Heart right ventricle (tissue), 16 donors: ENCODE measurements at regions of chr10 and their contacts with region 1.

Region 1: DNA sequence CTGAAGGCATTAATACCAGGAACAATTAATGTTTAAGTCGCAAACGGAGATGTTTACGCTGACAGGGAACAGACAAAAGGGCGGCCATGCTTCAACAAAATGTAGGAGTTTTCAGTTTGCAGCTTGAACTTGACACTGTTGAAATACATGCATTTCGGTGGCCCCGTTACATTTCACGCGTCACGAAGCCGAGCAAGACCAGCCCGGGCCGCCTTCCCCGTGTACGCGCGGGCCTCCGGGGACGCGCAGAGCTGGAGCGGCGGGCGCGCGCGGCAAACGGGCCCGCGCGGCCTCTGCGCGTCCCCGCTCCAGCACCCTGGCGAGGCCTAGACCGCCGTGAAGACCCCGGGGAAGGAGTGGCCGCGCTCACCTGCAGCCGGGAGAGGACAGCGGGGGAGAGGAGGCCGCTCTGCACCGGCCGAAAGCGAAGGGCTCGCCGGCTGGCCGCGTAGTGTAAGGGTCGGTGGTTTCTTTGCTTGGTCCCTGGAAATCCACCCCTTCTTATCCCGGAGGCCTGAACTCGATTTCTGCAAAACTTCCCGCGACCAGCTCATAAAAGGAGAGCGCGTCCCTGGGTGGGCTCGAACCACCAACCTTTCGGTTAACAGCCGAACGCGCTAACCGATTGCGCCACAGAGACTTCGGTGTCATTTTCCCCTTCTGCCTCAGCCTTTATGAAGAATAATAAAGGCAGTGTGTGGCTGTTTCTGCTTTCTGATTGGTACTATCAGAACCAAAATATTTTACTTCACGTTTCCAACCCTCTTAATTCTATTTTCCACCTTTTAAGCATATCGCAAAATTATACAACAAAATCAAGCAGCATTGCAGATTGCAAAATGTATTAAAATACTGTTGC is 11.4 kb upstream of the EBLN1 start:
- DNase-seq: peak; percentile 83 to 91
- ATAC-seq: peak; percentile 98 to 100 (median 98)
- H3K4me3 ChIP-seq: peak overlapping the region; percentile 53 to 81 (median 76)
- H3K27ac ChIP-seq: peak overlapping the region; percentile 84 to 95 (median 92)
- H3K4me1 ChIP-seq: peaks cover 0 to 14% (median 8%) of the 10 kb centered on the region in 9 donors
- H3K27me3 ChIP-seq: no peaks in the 10 kb centered on the region
- CTCF ChIP-seq: no peak

Region 2: DNA sequence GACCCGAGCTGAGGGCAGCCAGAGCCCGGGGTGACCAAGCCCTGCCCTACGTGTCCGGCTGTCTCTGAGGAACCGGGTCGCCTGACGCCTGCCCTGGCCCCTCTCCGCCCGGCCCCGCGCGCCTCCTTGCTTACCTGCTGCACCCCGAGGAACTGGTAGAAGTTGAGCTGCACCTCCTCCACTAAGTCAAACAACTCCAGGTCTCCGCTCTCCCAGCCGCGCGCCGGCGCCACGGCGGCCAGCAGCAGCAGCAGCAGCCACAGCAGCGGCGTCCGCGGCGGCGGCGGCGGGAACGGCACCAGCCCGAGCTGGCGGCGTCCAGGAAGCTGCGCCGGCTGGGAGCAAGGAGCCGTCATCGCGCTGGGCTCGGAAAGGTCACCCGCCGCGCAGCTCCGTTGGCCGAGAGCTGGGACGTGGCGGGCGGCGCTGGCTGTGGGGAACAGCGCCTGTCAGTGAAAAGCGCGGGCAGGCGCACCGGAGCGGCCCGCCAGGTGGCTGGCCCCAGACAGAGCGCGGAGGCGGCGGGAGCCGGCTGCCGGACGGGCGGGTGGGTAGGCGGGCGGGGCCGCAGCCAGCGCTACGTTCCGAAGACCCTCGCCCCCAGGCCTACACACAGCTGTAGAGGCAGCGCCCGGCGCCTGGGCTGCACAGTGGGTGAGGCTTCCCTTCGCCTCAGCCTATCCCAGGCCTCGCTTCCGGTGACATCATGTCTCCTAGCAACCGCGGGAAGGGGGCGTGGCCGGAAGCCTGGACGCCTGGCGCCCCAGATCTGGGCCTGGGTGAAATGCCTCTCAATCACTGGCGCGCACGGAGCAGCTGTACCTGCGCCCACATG is 225.9 kb before region 1 on chr10 and contains the start of gene DNAJC1:
- intact Hi-C with region 1: loop called in 5 of 10 experiments (anchors 5 to 10 kb)
- DNase-seq: peak; percentile 98 to 99
- ATAC-seq: peak; percentile 99 to 100 (median 100)
- H3K4me3 ChIP-seq: peak within 1 kb of the TSS; percentile 52 to 94 (median 80)
- H3K27ac ChIP-seq: peak within 1 kb of the TSS; percentile 72 to 98 (median 94)
- H3K4me1 ChIP-seq: peaks cover 0 to 28% (median 16%) of the 10 kb centered on the region in 9 donors
- H3K27me3 ChIP-seq: no peaks in the 10 kb centered on the region
- CTCF ChIP-seq: peak in 4 of 9 donors; percentile 5 to 21 (median 11)
- total RNA-seq, gene DNAJC1: 8.9 to 18.1 (median 11.4) TPM

Region 3: DNA sequence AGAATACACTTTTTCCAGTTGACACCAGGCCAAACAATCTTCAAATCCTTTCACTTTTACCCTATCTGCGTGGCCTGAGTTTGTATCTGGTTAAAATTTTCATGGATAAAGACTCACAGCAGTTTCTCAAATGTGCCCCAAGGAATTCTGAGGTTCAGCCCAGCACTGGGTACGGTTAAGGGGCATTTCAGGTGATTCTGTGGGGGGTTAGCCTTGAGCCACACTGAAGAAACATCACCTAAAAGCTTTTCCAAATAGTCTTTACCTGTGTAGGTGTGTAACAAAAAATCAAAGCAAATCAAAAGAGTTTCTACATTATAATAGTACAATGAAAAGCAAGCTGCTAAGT is 141.8 kb before region 1 on chr10:
- intact Hi-C with region 1: no loop called
- DNase-seq: no peak
- ATAC-seq: no peak
- H3K4me3 ChIP-seq: no peak overlapping the region
- H3K27ac ChIP-seq: peak overlapping the region in 6 of 10 donors; percentile 5 to 74 (median 24)
- H3K4me1 ChIP-seq: peaks cover 0 to 19% (median 11%) of the 10 kb centered on the region in 9 donors
- H3K27me3 ChIP-seq: no peaks in the 10 kb centered on the region
- CTCF ChIP-seq: no peak

Region 4: DNA sequence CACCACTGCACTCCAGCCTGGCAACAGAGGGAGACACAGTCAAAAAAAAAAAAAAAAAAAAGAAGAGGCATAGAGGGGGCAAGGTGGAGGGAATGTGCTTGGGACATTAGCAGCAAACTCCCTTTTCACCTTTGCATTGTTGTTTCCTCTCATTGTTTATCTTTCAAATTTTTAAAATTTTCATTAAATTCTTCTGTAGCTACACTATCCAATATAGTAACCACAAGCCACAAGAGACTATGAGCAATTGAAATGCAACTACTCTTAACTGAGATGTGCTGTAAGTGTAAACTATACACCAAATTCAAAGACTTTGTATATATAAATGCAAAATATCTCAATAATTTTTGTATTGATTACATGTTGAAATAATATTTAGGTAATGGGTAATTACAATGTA is 54.7 kb before region 1 on chr10:
- intact Hi-C with region 1: no loop called
- DNase-seq: no peak
- ATAC-seq: no peak
- H3K4me3 ChIP-seq: no peak overlapping the region
- H3K27ac ChIP-seq: no peak overlapping the region
- H3K4me1 ChIP-seq: no peaks in the 10 kb centered on the region
- H3K27me3 ChIP-seq: peaks cover 0 to 18% (median 13%) of the 10 kb centered on the region in 7 donors
- CTCF ChIP-seq: no peak

Region 5: GRCh38 chr10:22308390-22308789 is 79.2 kb after region 1 on chr10:
- intact Hi-C with region 1: loop called in 1 of 10 experiments (anchors 10 kb)
- DNase-seq: no peak
- ATAC-seq: no peak
- H3K4me3 ChIP-seq: no peak overlapping the region
- H3K27ac ChIP-seq: no peak overlapping the region
- H3K4me1 ChIP-seq: no peaks in the 10 kb centered on the region
- H3K27me3 ChIP-seq: no peaks in the 10 kb centered on the region
- CTCF ChIP-seq: no peak

Region 6: DNA sequence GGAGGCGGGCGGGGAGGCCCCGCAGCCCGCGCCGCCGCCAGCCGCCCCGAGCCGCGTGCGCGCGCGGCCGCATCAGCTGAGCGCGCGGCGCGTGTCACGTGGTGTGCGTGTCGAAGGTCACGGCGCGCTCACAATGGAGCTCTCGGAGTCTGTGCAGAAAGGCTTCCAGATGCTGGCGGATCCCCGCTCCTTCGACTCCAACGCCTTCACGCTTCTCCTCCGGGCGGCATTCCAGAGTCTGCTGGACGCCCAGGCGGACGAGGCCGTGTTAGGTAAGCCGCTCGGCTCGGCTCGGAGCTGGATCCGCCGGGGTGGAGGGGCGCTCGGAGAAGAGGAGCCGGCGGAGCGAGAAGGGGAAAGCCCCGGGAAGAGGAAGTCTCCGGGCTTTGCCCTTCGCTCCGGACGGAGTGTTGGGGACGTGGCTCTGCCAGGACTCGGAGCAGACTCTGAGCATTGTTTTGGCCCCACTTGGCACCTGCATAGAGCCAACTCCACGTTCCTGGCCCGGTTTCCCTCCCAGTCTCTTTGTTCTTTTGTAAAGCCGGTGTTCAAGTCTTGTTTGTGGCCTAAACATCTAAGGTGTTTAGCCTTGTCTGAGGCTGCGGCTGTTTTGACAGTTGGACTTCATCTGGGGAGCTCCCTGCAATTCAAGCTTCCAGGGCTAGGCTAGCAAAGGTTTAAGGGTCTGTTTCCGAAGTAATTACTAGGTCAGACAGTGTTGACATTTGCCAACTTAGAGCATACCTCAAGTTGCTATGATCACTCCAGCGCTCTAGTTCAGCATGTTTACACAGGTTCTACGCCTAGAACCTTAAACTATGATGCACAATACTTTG is 87.3 kb after region 1 on chr10 and contains the start of gene COMMD3:
- intact Hi-C with region 1: loop called in 7 of 10 experiments (anchors 2 to 5 kb)
- DNase-seq: peak; percentile 89 to 91
- ATAC-seq: peak; percentile 91 to 96 (median 93)
- H3K4me3 ChIP-seq: peak within 1 kb of the TSS; percentile 83 to 96 (median 90)
- H3K27ac ChIP-seq: peak within 1 kb of the TSS; percentile 85 to 96 (median 94)
- H3K4me1 ChIP-seq: peaks cover 0 to 44% (median 35%) of the 10 kb centered on the region in 9 donors
- H3K27me3 ChIP-seq: no peaks in the 10 kb centered on the region
- CTCF ChIP-seq: no peak
- total RNA-seq, gene COMMD3: 72.7 to 95.0 (median 80.6) TPM

Region 7: GRCh38 chr10:22340362-22341189 is 111.4 kb after region 1 on chr10:
- intact Hi-C with region 1: loop called in 1 of 10 experiments (anchors 10 kb)
- DNase-seq: peak; percentile 66 to 72
- ATAC-seq: peak; percentile 84 to 92 (median 87)
- H3K4me3 ChIP-seq: peak overlapping the region; percentile 70 to 90 (median 82)
- H3K27ac ChIP-seq: peak overlapping the region; percentile 81 to 97 (median 95)
- H3K4me1 ChIP-seq: peaks cover 0 to 41% (median 25%) of the 10 kb centered on the region in 9 donors
- H3K27me3 ChIP-seq: peaks cover 24 to 94% (median 87%) of the 10 kb centered on the region in 7 donors
- CTCF ChIP-seq: peak in 1 of 9 donors; percentile 5

Region 8: DNA sequence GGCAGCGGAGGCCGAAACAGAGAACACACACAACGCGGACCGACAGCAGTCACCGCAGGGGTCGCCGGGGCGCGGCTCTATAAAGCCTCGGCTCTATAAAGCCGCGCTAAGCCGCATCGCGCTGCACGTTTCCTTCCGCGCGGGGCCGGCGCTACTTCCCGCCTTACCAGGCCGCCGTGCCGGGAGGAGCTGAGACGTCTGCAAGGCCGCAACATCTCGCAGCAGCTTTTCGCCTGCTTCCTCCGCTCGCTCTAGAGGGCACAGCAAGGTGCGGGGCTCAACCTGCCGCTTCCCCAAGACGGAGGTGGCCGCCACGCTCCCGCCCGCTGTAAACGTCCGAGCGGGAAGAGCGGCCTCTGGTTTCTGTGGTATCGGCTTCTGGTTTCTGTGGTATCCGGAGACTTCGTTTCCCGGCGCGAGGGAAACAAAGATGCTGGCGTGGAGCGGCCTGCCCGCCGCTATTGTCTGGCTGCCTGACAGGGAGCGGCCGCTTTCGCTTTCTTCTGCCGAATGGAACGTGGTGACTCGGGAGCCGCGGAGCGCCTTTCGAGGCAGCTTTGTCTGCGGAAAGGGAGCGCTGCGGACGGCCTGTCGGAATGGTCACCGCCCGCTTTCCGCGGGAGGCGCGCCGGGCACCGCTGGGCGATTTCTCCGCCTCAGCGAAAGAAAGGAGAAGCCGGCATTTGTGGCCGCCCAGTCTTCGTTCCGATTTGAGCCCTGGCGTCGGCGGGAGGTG is 207.9 kb after region 1 on chr10:
- intact Hi-C with region 1: loop called in 1 of 10 experiments (anchors 2 kb)
- DNase-seq: peak; percentile 92 to 93
- ATAC-seq: peak; percentile 94 to 98 (median 97)
- H3K4me3 ChIP-seq: peak overlapping the region; percentile 65 to 88 (median 78)
- H3K27ac ChIP-seq: peak overlapping the region; percentile 91 to 98 (median 95)
- H3K4me1 ChIP-seq: peaks cover 0 to 29% (median 20%) of the 10 kb centered on the region in 9 donors
- H3K27me3 ChIP-seq: peaks cover 0 to 15% (median 0%) of the 10 kb centered on the region in 7 donors
- CTCF ChIP-seq: peak in 5 of 9 donors; percentile 3 to 49 (median 22)